ENCODE measurements at regions of chr22 and their contacts with region 1.

Region 1: GRCh38 chr22:45096256-45096907 is 67.3 kb upstream of the NUP50 start:
- DNase-seq: peak; percentile 24
- H3K4me3 Mint-ChIP-seq: no peak overlapping the region
- H3K27ac Mint-ChIP-seq: no peak overlapping the region
- H3K4me1 Mint-ChIP-seq: no peaks in the 10 kb centered on the region
- H3K27me3 Mint-ChIP-seq: peaks cover 9% of the 10 kb centered on the region

Region 2: DNA sequence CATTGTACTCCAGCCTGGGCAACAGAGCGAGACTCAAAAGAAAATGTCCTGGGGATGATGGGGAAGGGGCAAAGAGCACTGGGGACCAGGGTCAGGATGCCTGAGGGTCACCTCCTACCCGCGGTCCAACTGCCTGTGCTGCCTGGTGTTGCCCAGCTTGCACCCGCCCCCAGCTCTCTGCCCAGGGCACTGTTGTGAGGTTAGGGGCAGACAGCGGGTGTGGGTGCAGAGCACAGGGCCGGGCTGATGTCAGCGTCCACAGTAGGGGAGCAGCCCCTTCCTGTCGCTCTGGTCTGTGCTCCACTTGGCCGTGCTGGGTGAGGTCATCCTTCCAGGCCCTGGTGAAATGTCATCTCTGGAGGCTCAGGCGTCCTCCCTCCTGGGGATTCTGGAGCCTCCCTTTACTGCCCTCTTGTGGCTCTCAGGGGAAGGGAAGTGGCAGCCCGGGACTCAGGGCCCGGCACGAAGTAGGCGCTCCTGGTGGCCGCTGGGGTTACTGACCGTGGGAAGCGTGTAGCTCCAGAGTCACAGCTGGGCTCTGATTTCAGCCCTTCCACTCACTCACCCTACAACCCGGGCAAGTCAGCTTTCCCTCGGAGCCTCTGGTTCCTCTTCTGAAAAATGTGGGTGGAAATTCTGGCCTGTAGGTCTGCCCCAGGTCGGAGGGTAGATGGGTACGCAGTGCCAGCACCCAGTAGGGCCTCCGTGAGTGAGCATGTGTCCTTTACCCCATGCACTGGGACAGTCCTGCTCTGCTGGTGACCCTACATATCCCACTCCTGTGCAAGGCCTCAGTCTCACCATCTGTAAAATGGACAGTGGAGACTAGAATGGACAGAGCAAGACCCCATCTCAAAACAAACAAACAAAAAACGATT is 411.6 kb before region 1 on chr22:
- intact Hi-C with region 1: no loop called
- DNase-seq: peak; percentile 80
- H3K4me3 Mint-ChIP-seq: peak overlapping the region; percentile 49
- H3K27ac Mint-ChIP-seq: peak overlapping the region; percentile 68
- H3K4me1 Mint-ChIP-seq: peaks cover 46% of the 10 kb centered on the region
- H3K27me3 Mint-ChIP-seq: peaks cover 1% of the 10 kb centered on the region

Region 3: DNA sequence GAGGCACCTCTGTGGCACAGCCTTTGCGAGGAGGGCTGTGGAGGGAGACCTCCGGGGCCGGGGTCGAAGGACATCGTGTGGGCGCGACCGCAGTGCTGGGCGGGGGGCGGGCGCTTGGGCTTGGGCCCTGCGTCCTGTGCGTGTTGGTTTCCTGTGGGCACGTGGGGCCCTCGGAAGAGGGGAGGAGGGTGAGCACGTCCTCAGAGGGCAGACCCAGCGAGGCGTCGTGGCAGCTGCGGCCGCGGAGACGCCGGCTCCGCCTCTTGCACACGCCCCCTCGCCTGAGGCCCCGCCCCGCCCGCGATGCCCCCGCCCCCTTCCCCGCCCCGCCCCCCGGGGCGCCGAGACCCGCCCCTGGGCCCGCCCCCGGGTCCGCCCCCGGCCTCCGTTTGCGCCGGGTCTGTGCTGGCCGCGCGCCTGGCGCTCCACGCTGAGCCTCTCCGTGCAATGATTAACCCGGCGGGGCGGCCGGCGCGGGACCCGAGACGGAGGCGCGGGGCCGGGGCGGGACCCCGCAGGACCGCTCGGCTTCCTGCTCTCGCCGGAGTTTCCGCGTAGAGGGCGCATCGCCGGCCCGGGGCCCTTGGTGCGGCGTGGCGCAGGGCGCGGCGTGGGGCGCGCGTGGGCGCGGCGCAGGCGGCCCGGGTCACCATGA is 394.4 kb before region 1 on chr22 and contains the start of gene PRR5:
- intact Hi-C with region 1: loop called (anchors 2 kb)
- DNase-seq: peak; percentile 78
- H3K4me3 Mint-ChIP-seq: peak within 1 kb of the TSS; percentile 72
- H3K27ac Mint-ChIP-seq: peak within 1 kb of the TSS; percentile 40
- H3K4me1 Mint-ChIP-seq: no peaks in the 10 kb centered on the region
- H3K27me3 Mint-ChIP-seq: peaks cover 6% of the 10 kb centered on the region
- total RNA-seq, gene PRR5: 19.7 and 21.6 TPM in 2 replicates

Region 4: GRCh38 chr22:44819971-44820631 is 276.3 kb before region 1 on chr22:
- intact Hi-C with region 1: loop called (anchors 1 kb)
- DNase-seq: no peak
- H3K4me3 Mint-ChIP-seq: no peak overlapping the region
- H3K27ac Mint-ChIP-seq: no peak overlapping the region
- H3K4me1 Mint-ChIP-seq: no peaks in the 10 kb centered on the region
- H3K27me3 Mint-ChIP-seq: no peaks in the 10 kb centered on the region

Region 5: DNA sequence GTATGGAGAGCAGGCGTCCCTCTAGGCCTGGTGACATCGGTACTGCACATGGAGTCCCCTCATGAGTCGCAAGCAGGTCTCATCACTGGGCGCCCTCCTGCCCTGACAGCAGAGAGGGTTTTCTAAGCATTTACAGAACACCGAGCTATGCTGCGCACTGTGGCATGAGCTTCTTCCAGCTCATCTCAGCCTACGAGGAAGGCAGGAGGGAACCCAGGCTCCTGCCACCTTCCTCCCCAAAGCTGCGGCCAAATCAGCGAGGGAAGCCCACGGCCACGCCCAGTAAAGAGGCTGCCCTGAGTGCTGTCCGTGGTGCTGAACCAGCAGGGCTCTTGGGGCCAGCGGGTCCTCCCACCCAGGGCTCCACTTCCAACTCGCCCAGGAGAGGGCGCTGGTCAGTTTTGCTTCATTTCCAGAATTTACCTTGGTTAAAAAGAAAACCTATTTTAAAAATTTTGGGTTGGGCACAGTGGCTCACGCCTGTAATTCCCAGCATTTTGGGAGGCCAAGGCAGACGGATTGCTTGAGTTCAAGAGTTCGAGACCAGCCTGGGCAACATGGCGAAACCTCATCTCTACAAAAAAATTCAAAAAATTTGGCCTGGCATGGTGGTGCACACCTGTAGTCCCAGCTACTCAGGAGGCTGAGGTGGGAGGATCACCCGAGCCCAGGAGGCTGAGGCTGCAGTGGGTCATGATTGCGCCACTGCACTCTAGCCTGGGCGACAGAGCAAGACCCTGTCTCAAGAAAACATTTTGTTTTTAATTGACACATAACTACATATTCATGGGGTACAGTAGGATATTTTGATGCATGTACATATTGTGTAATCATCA is 120.7 kb before region 1 on chr22:
- intact Hi-C with region 1: loop called (anchors 1 kb)
- DNase-seq: peak; percentile 72
- H3K4me3 Mint-ChIP-seq: no peak overlapping the region
- H3K27ac Mint-ChIP-seq: no peak overlapping the region
- H3K4me1 Mint-ChIP-seq: no peaks in the 10 kb centered on the region
- H3K27me3 Mint-ChIP-seq: no peaks in the 10 kb centered on the region

Region 6: DNA sequence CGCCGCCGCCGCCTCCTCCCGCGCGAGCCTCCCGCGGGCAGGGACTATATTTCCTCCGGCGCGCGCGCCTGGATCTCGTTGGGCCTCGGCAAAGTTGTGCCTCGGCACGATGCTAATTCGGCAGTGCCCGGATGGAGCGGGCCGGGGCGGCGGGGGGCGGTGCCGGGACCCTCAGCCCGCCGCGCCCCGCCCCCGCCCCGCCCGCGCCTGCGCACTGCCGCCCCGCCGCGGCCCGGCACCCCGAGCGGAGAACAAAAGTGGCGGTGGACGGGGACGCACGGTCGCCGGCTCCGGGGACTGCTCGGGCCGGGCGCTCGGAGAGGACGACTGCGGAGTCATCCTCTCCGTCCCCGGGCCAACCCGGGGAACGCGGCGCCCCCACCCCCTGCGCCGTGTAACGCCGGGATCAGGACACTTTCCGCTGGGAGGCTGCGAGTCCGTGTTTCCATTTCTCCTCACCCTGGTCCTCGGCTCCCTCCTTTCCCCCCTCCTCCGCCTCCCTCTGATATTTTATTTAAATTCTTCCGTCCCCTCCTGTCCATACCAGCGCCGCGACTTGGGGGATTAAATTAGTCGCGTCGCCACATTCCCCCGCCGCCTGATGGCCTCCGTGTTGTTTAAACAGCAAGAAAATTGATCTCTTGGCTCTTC is 86.4 kb before region 1 on chr22 and contains the start of gene PHF21B:
- intact Hi-C with region 1: loop called (anchors 10 kb)
- DNase-seq: peak; percentile 0
- H3K4me3 Mint-ChIP-seq: peak within 1 kb of the TSS; percentile 85
- H3K27ac Mint-ChIP-seq: peak within 1 kb of the TSS; percentile 77
- H3K4me1 Mint-ChIP-seq: peaks cover 12% of the 10 kb centered on the region
- H3K27me3 Mint-ChIP-seq: peaks cover 50% of the 10 kb centered on the region
- total RNA-seq, gene PHF21B: 0.21 TPM in 1 of 2 replicates, not detected in the other